Caco-2 (cell line): ENCODE measurements at regions of chr15 and their contacts with region 1.

Region 1: DNA sequence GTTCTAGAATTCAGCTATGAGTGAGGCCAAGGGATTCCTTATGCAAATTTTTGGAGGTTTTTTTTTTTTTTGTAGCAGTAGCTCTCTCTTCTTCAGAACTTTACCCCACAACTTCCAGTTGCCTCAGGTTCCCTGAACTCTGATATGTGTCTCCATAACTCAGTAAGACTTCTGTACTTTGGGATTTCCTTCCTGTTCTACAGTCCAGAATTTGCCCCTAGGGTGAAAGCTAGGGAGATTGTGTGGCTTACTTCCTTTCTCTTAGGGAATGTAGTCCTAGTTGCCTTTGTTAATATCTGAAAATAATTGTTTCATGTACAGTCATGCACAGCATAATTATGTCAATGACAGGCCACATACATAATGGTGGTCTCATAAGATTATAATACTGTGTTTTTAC is 30.8 kb downstream of the LRRC28 start:
- DNase-seq: no peak
- H3K4me3 ChIP-seq: no peak overlapping the region
- H3K4me3 Mint-ChIP-seq: no peak overlapping the region
- H3K27ac Mint-ChIP-seq: no peak overlapping the region
- H3K4me1 ChIP-seq: no peaks in the 10 kb centered on the region
- H3K4me1 Mint-ChIP-seq: no peaks in the 10 kb centered on the region
- H3K27me3 ChIP-seq: no peaks in the 10 kb centered on the region
- H3K27me3 Mint-ChIP-seq: no peaks in the 10 kb centered on the region
- CTCF ChIP-seq: no peak

Region 2: GRCh38 chr15:99361541-99362185 is 79.5 kb after region 1 on chr15:
- CTCF ChIA-PET with region 1: no interaction called
- POLR2A ChIA-PET with region 1: no interaction called
- intact Hi-C with region 1: loop called (anchors 5 kb)
- DNase-seq: no peak
- H3K4me3 ChIP-seq: no peak overlapping the region
- H3K4me3 Mint-ChIP-seq: no peak overlapping the region
- H3K27ac Mint-ChIP-seq: no peak overlapping the region
- H3K4me1 ChIP-seq: no peaks in the 10 kb centered on the region
- H3K4me1 Mint-ChIP-seq: no peaks in the 10 kb centered on the region
- H3K27me3 ChIP-seq: no peaks in the 10 kb centered on the region
- H3K27me3 Mint-ChIP-seq: no peaks in the 10 kb centered on the region
- CTCF ChIP-seq: peak in 1 of 2 experiments; percentile 61